PC-3 (cell line): ENCODE measurements at regions of chr18 and their contacts with region 1.

Region 1: DNA sequence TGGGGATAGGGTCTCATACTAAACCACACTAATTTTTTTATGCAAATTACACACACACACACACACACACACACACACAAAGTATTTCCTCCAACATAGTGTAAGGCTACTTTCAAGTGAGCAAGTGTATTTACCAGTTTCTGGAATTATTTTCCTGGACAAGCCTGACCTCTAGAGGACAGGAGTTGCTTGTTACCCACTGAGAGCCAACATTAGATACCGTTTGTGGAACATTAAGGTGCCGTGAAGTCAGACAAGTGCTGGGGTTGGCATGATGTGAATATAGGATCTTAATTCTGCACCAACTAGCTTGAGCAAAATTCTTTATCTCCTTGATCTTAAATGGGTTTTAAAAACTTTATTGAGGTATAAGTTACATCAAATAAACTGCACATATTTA is 39.3 kb upstream of the SERPINB2 start:
- DNase-seq: peak; percentile 84
- ATAC-seq: peak; percentile 70
- H3K4me3 ChIP-seq: no peak overlapping the region
- H3K27ac ChIP-seq: no peak overlapping the region
- H3K4me1 ChIP-seq: peaks cover 5% of the 10 kb centered on the region; the same call in 1 of the 2 replicates
- H3K27me3 ChIP-seq: no peaks in the 10 kb centered on the region
- CTCF ChIP-seq: peak; percentile 85

Region 2: GRCh38 chr18:63016270-63016669 is 831.9 kb before region 1 on chr18:
- CTCF ChIA-PET with region 1: no interaction called
- POLR2A ChIA-PET with region 1: no interaction called
- intact Hi-C with region 1: loop called (anchors 10 kb)
- DNase-seq: peak; percentile 67
- ATAC-seq: peak; percentile 64; the same call in 1 of the 2 replicates
- H3K4me3 ChIP-seq: no peak overlapping the region
- H3K27ac ChIP-seq: no peak overlapping the region
- H3K4me1 ChIP-seq: no peaks in the 10 kb centered on the region
- H3K27me3 ChIP-seq: peaks cover 74% of the 10 kb centered on the region
- CTCF ChIP-seq: peak; percentile 80

Region 3: GRCh38 chr18:63518178-63519012 is 329.8 kb before region 1 on chr18:
- CTCF ChIA-PET with region 1: interaction called, 4 read pairs
- POLR2A ChIA-PET with region 1: no interaction called
- intact Hi-C with region 1: loop called (anchors 1 kb)
- DNase-seq: peak; percentile 91
- ATAC-seq: peak; percentile 97
- H3K4me3 ChIP-seq: no peak overlapping the region
- H3K27ac ChIP-seq: no peak overlapping the region
- H3K4me1 ChIP-seq: peaks cover 8% of the 10 kb centered on the region; the same call in 1 of the 2 replicates
- H3K27me3 ChIP-seq: no peaks in the 10 kb centered on the region
- CTCF ChIP-seq: peak; percentile 76

Region 4: DNA sequence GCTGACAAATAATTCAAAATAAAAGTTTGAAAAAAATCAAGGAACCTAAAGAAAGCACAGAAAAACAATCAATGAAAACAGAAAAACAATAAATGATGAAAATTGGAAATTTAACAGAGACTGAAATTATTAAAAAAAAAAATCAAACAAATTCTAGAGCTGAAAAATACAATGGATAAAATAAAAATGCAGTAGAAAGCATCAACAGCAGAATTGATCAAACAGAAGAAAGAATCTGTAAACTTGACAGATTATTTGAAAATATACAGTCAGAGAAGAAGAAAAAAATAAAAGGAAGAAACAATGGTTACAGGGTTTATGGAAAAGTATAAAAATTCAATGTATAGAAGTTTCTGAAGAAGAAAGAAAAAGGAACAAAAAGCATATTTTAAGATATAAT is 220.3 kb before region 1 on chr18:
- CTCF ChIA-PET with region 1: no interaction called
- POLR2A ChIA-PET with region 1: no interaction called
- intact Hi-C with region 1: no loop called
- DNase-seq: no peak
- ATAC-seq: no peak
- H3K4me3 ChIP-seq: no peak overlapping the region
- H3K27ac ChIP-seq: no peak overlapping the region
- H3K4me1 ChIP-seq: no peaks in the 10 kb centered on the region
- H3K27me3 ChIP-seq: no peaks in the 10 kb centered on the region
- CTCF ChIP-seq: no peak

Region 5: DNA sequence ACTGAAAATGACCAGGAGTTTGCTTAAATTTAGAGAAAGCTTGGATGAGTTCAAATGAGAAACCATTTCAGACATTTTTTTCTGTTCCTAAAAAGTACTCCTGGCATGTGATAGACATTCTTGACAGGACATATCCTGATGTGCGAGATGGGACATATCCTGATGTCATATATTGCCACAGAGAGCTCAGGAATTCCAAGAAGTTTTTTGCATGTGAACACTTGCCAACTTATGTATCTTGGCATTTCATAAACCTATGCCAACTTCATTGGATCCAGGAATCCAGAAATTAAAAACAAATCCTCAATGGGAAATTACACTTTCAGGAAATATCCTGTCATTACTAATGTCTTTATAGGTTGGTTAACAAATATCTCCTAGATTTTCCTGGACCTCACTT is 183.6 kb before region 1 on chr18:
- CTCF ChIA-PET with region 1: no interaction called
- POLR2A ChIA-PET with region 1: no interaction called
- intact Hi-C with region 1: no loop called
- DNase-seq: no peak
- ATAC-seq: no peak; the same call in 1 of the 2 replicates
- H3K4me3 ChIP-seq: no peak overlapping the region
- H3K27ac ChIP-seq: peak overlapping the region; percentile 23; the same call in 1 of the 2 replicates
- H3K4me1 ChIP-seq: peaks cover 5% of the 10 kb centered on the region
- H3K27me3 ChIP-seq: no peaks in the 10 kb centered on the region
- CTCF ChIP-seq: no peak

Region 6: GRCh38 chr18:63676526-63676925 is 171.6 kb before region 1 on chr18:
- CTCF ChIA-PET with region 1: no interaction called
- POLR2A ChIA-PET with region 1: no interaction called
- intact Hi-C with region 1: loop called (anchors 1 kb)
- DNase-seq: peak; percentile 71
- ATAC-seq: peak; percentile 70
- H3K4me3 ChIP-seq: no peak overlapping the region
- H3K27ac ChIP-seq: peak overlapping the region; percentile 73
- H3K4me1 ChIP-seq: peaks cover 37% of the 10 kb centered on the region
- H3K27me3 ChIP-seq: no peaks in the 10 kb centered on the region
- CTCF ChIP-seq: peak; percentile 88

Region 7: GRCh38 chr18:63741769-63742168 is 106.4 kb before region 1 on chr18:
- CTCF ChIA-PET with region 1: interaction called, 22 read pairs
- POLR2A ChIA-PET with region 1: interaction called, 3 read pairs
- intact Hi-C with region 1: loop called (anchors 1 kb)
- DNase-seq: peak; percentile 81
- ATAC-seq: peak; percentile 72
- H3K4me3 ChIP-seq: no peak overlapping the region
- H3K27ac ChIP-seq: peak overlapping the region; percentile 97
- H3K4me1 ChIP-seq: peaks cover 20% of the 10 kb centered on the region
- H3K27me3 ChIP-seq: no peaks in the 10 kb centered on the region
- CTCF ChIP-seq: peak; percentile 88

Region 8: GRCh38 chr18:63936156-63936931 is 88.2 kb after region 1 on chr18:
- CTCF ChIA-PET with region 1: interaction called, 6 read pairs
- POLR2A ChIA-PET with region 1: no interaction called
- intact Hi-C with region 1: loop called (anchors 1 kb)
- DNase-seq: peak; percentile 74
- ATAC-seq: peak; percentile 99
- H3K4me3 ChIP-seq: peak overlapping the region; percentile 82
- H3K27ac ChIP-seq: no peak overlapping the region
- H3K4me1 ChIP-seq: no peaks in the 10 kb centered on the region
- H3K27me3 ChIP-seq: no peaks in the 10 kb centered on the region
- CTCF ChIP-seq: peak; percentile 79

Region 9: GRCh38 chr18:64017870-64018269 is 169.7 kb after region 1 on chr18:
- CTCF ChIA-PET with region 1: no interaction called
- POLR2A ChIA-PET with region 1: no interaction called
- intact Hi-C with region 1: no loop called
- DNase-seq: peak; percentile 60
- ATAC-seq: peak; percentile 46; the same call in 1 of the 2 replicates
- H3K4me3 ChIP-seq: no peak overlapping the region
- H3K27ac ChIP-seq: no peak overlapping the region
- H3K4me1 ChIP-seq: no peaks in the 10 kb centered on the region
- H3K27me3 ChIP-seq: peaks cover 37% of the 10 kb centered on the region
- CTCF ChIP-seq: peak; percentile 70

Region 10: GRCh38 chr18:64027931-64028695 is 180.0 kb after region 1 on chr18:
- CTCF ChIA-PET with region 1: no interaction called
- POLR2A ChIA-PET with region 1: no interaction called
- intact Hi-C with region 1: no loop called
- DNase-seq: no peak
- ATAC-seq: no peak
- H3K4me3 ChIP-seq: no peak overlapping the region
- H3K27ac ChIP-seq: no peak overlapping the region
- H3K4me1 ChIP-seq: no peaks in the 10 kb centered on the region
- H3K27me3 ChIP-seq: peaks cover 39% of the 10 kb centered on the region
- CTCF ChIP-seq: no peak